Mammary epithelial cell (primary cell): ENCODE measurements at regions of chr6 and their contacts with region 1.

Region 1: DNA sequence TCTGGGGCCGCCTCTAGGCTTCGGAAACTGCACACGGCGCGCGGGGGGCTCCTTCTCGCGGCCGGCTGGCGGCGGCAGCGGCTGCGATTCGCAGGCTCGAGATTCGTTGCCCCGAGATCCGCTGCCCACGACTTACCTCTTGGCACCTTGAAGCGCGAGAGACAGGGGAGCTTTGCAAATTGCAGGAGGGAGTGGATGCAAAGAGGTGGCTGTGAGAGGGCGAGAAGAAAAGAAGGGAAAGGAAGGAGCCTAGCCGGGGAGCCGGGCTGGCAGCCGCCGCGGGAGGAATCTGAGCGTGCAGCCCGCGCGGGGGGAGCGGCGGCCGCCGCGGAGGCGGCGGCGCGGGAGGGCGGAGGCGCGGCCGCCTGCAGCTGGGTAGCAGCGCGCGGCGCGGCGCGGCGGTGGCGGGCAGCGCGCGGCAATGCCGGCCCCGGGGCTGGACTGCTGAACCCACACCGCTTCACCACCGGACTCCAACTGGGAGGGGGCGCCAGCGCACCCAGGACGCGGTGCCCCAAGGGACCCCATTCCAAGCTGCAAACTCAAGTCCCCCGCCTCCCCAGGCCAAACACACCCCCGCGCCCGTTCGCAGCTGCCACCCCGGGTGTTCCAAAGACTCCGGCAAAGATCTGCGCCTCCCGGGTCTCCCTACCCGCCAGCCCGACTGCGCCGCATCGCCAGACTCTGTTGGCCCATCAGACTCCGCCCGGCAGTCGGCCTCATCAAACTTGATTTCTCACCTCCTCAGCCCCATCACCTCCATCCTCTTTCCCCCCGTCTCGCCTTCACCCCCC is 44.2 kb upstream of the SUPT3H start:
- DNase-seq: peak; percentile 66
- H3K4me3 ChIP-seq: peak overlapping the region; percentile 68 to 91 (median 88)
- H3K27ac ChIP-seq: peak overlapping the region; percentile 36
- H3K4me1 ChIP-seq: peaks cover 27% of the 10 kb centered on the region
- H3K27me3 ChIP-seq: no peaks in the 10 kb centered on the region
- CTCF ChIP-seq: peak in 1 of 2 donors; percentile 52

Region 2: GRCh38 chr6:44475779-44476434 is 946.0 kb before region 1 on chr6:
- CTCF ChIA-PET with region 1: no interaction called
- dilution Hi-C with region 1: no loop called
- in situ Hi-C with region 1: loop called in 1 of 2 experiments (anchors 10 kb)
- intact Hi-C with region 1: loop called (anchors 1 kb)
- DNase-seq: peak; percentile 70
- H3K4me3 ChIP-seq: no peak overlapping the region
- H3K27ac ChIP-seq: no peak overlapping the region
- H3K4me1 ChIP-seq: peaks cover 15% of the 10 kb centered on the region
- H3K27me3 ChIP-seq: no peaks in the 10 kb centered on the region
- CTCF ChIP-seq: peak; percentile 89 to 97

Region 3: DNA sequence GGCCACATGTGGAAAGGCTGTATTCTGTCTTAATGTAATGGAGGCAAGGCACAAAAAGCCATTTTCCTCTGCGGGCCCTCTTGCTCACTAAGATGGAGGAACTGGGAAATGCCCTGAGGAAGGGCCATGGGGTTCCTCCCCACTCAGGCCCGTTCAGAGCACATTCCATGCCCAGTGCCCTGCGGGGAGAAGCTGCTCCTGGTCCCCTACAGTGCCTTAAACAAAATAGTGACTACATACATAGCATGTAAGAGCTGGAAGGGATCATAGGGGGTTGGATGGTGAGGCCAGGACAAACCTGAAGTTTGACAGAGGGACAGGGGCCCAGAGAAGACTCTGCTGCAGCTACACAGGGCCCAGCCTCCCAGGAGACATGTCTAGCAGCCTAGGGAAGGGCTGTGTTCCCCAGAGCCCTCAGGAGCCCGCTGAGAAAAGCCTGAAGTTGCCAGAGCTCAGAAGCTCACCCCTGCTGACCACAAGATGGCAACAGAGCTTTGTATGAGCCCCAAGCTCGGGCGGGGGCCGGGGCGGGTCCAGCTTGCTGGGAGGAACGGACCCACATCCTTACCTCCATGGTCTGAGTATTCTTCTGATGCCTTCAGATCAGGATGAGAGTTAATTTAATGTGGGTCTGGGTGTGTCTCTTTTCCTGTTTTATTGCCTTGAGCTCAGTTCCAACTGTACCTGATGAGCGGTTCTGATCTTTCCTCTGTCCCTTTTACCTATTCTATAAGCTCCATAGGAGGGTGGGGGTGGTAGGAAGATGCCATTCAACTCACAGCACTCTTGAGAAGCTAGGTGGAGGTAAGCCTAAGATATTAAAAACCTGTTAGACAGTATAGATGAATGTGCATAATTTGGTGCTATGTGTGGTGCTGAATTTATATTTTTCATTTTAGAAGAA is 791.5 kb before region 1 on chr6:
- CTCF ChIA-PET with region 1: interaction called, 14 read pairs
- dilution Hi-C with region 1: no loop called
- in situ Hi-C with region 1: no loop called
- intact Hi-C with region 1: loop called (anchors 1 kb)
- DNase-seq: peak; percentile 33
- H3K4me3 ChIP-seq: no peak overlapping the region
- H3K27ac ChIP-seq: no peak overlapping the region
- H3K4me1 ChIP-seq: no peaks in the 10 kb centered on the region
- H3K27me3 ChIP-seq: no peaks in the 10 kb centered on the region
- CTCF ChIP-seq: peak; percentile 46 to 74

Region 4: DNA sequence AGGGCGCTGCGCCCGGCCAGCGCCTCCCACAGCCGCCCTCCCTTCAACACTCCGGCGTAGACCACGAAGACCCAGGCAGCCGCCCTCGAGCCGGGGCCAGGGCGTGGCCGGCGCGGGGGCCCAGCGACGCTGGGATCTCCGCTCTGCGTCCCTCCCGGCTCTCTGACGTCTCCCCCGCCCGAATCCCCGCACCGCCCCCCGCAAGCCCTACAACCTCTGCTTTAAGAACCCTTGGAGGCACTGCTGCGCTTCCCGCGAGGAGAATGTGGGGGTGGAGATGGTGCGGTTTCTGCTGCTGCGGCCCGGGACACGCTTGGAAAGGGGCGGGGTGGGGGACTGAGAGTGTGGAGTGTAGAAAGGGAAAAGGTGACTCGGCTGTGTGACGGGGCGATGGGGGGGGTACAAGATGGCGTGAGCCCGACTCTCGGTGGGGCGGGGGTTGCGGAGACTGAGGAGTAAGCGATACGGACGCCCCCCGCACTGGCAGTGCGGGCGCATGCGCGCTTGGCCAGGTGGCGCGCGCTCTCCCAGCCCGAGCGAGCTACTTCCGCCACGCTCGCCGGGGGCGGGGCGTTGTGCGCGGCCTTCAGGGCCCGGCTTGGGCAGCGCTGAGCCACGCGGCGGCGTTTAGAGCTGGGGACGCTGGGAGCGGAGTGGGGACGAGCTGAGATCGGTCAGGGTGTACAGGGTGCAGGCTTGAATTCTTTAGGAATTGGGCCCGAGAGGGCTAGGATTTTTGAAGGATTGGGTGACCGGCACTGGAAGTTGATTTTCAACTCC is 44.2 kb before region 1 on chr6 and contains the start of gene SUPT3H:
- CTCF ChIA-PET with region 1: no interaction called
- dilution Hi-C with region 1: no loop called
- in situ Hi-C with region 1: no loop called
- intact Hi-C with region 1: loop called (anchors 2 kb)
- DNase-seq: peak; percentile 90
- H3K4me3 ChIP-seq: peak within 1 kb of the TSS; percentile 72 to 83 (median 79)
- H3K27ac ChIP-seq: peak within 1 kb of the TSS; percentile 81
- H3K4me1 ChIP-seq: peaks cover 15% of the 10 kb centered on the region
- H3K27me3 ChIP-seq: no peaks in the 10 kb centered on the region
- CTCF ChIP-seq: peak in 1 of 2 donors; percentile 48
- total RNA-seq, gene SUPT3H: 7.3 to 8.3 TPM

Region 5: GRCh38 chr6:45608252-45608911 is 186.5 kb after region 1 on chr6:
- CTCF ChIA-PET with region 1: no interaction called
- dilution Hi-C with region 1: no loop called
- in situ Hi-C with region 1: loop called in 1 of 2 experiments (anchors 10 kb)
- intact Hi-C with region 1: no loop called
- DNase-seq: peak; percentile 69
- H3K4me3 ChIP-seq: no peak overlapping the region
- H3K27ac ChIP-seq: peak overlapping the region; percentile 70
- H3K4me1 ChIP-seq: peaks cover 30% of the 10 kb centered on the region
- H3K27me3 ChIP-seq: no peaks in the 10 kb centered on the region
- CTCF ChIP-seq: no peak

Region 6: DNA sequence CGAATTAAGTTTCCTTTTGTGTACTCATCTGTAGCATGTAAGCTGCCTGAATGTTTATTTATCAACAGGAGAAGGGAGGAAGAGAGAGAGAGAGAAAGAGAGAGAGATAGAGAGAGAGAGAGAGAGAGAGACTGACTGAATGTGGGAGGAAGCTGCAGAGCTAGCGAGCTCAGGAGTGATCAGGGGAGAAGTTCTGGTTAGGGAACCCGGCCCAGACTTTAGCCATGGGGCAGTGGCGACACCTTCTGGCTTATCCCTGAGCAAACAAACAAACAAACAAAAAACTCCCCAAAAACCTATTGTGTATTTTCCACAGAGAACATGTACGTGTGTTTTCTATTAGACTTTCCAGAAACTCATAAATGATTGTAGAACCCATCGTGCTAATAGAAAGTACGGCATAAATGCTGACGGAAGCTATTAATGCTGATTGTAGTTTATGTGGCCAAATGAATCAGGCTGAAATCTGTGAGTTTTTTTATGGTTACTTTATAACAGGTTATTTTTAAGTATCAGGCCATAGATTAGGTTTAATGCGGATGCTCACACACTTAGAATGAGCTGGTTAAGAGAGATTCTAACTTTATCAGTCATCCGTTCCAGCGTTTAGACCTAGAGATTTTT is 500.9 kb after region 1 on chr6:
- CTCF ChIA-PET with region 1: no interaction called
- dilution Hi-C with region 1: no loop called
- in situ Hi-C with region 1: loop called in 1 of 2 experiments (anchors 10 kb)
- intact Hi-C with region 1: loop called (anchors 1 kb)
- DNase-seq: peak; percentile 29
- H3K4me3 ChIP-seq: no peak overlapping the region
- H3K27ac ChIP-seq: no peak overlapping the region
- H3K4me1 ChIP-seq: no peaks in the 10 kb centered on the region
- H3K27me3 ChIP-seq: no peaks in the 10 kb centered on the region
- CTCF ChIP-seq: peak; percentile 53 to 90